ENCODE measurements at regions of chr17 and their contacts with region 1.

Region 1: GRCh38 chr17:40474419-40475002 is 26.9 kb downstream of the TNS4 start:
- H3K4me3 ChIP-seq: no peak overlapping the region
- H3K27ac ChIP-seq: no peak overlapping the region
- H3K4me1 ChIP-seq: no peaks in the 10 kb centered on the region; the same call in 1 of the 2 replicates
- CTCF ChIP-seq: no peak

Region 2: DNA sequence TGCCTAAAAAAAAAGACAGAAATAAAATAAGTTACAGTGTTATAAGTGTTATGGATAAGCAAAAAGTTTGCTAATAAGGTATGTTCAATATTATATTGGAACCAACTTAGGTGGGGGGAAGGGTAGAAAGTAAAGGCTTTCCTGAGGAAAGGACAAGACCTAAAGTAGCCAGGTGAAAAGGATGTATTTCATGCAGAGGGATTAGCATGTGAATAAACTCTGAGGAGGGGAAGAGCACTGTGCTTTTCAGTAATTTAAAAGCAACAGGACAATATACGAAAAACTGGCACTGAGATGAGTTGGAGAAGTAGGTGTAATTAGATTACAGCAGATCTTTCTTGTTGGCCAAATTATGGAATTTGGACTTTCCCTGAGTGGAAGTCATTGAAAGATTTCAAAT is 64.4 kb before region 1 on chr17:
- CTCF ChIA-PET with region 1: interaction called, 25 read pairs
- POLR2A ChIA-PET with region 1: interaction called, 8 read pairs
- H3K4me3 ChIP-seq: no peak overlapping the region
- H3K27ac ChIP-seq: no peak overlapping the region
- H3K4me1 ChIP-seq: no peaks in the 10 kb centered on the region
- CTCF ChIP-seq: no peak

Region 3: GRCh38 chr17:40422990-40423616 is 51.4 kb before region 1 on chr17:
- CTCF ChIA-PET with region 1: interaction called, 26 read pairs
- POLR2A ChIA-PET with region 1: interaction called, 22 read pairs
- H3K4me3 ChIP-seq: no peak overlapping the region
- H3K27ac ChIP-seq: no peak overlapping the region
- H3K4me1 ChIP-seq: peaks cover 8% of the 10 kb centered on the region
- CTCF ChIP-seq: peak; percentile 49

Region 4: GRCh38 chr17:40450175-40450574 is 24.3 kb before region 1 on chr17:
- CTCF ChIA-PET with region 1: interaction called, 57 read pairs
- POLR2A ChIA-PET with region 1: interaction called, 7 read pairs
- H3K4me3 ChIP-seq: no peak overlapping the region
- H3K27ac ChIP-seq: no peak overlapping the region
- H3K4me1 ChIP-seq: no peaks in the 10 kb centered on the region
- CTCF ChIP-seq: peak; percentile 60

Region 5: GRCh38 chr17:40490289-40490853 is 15.9 kb after region 1 on chr17:
- CTCF ChIA-PET with region 1: interaction called, 65 read pairs
- POLR2A ChIA-PET with region 1: interaction called, 13 read pairs
- H3K4me3 ChIP-seq: no peak overlapping the region
- H3K27ac ChIP-seq: no peak overlapping the region; the same call in 1 of the 2 replicates
- H3K4me1 ChIP-seq: peaks cover 17% of the 10 kb centered on the region
- CTCF ChIP-seq: no peak

Region 6: DNA sequence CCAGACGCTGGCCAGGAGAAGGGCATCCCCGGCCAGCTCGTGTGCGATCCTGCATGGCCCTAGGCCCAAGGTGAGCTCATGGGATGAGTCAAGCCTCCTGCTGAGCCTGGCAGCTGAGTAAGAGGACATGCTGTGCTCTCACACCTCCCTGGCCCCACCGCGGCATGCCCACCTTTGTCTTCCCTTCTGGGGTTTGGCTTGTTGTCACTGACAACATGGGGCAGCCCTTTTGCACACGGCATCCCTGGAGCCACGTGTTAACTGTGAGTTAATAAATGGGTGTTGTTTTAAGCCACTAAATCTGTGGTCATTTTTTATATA is 35.8 kb after region 1 on chr17:
- CTCF ChIA-PET with region 1: interaction called, 17 read pairs
- POLR2A ChIA-PET with region 1: interaction called, 9 read pairs
- H3K4me3 ChIP-seq: no peak overlapping the region
- H3K27ac ChIP-seq: no peak overlapping the region
- H3K4me1 ChIP-seq: 0 out of 2 replicates have a peak, but pooled peaks cover 4% of the 10 kb centered on the region
- CTCF ChIP-seq: no peak

Region 7: DNA sequence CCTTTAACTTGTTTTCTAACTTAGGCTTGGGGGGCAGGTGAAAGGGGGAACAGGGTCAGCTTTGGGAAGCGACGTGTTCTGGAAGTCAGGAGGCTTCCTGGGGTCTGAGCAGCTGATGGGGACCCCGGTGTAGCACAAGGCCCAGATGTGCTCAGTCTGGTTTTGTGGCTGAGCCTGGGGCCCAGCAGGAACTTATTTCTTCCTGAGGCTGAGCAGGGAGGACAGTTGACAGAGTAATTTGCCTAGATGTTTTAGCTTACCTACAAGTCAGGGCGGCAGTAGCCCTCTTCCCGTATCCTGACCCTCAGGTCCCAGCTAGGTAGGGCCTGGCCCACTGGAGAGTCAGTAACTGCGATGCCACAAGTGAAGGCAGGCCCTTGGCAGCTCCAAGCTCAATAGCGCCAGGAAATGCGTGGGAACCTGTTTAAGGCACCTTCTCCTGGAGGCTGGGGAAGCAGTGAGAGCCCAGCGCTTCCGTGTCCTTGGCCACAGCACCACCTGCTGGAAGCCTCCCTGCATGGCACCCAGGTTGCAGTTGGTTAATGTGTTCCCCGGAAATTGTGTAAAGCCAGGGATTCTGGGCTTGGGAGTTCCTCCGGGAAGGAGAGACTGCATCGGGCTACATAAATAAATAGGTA is 85.6 kb after region 1 on chr17:
- CTCF ChIA-PET with region 1: interaction called, 28 read pairs
- POLR2A ChIA-PET with region 1: no interaction called
- H3K4me3 ChIP-seq: no peak overlapping the region
- H3K27ac ChIP-seq: no peak overlapping the region
- H3K4me1 ChIP-seq: no peaks in the 10 kb centered on the region
- CTCF ChIP-seq: peak; percentile 97

Region 8: DNA sequence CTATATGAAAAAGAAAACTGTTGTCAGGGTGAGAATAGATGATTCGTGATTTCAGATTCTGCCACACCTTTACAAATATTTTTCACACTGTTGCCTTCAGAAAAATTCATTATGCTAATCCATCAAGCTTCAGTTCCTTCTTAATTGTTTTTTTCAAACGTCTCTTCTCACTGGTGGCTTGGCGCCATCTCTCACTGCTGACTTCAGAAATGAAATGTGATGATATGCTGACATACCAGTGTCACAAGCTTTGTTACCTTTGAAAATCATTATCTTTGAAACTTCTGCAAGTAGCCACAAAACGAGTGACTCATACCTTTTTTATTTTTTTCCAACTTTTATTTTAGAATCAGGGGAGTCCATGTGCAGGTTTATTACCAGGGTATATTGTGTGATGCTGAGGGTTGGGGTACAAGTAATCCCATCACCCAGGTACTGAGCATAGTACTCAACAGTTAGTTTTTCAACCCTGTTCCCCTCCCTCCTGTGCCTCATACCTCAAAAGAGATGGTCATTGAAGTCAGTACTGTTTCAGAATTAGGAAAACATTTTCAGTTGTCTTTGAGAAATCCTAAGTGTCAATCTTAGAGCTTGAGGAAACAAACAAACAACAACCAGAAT is 204.5 kb after region 1 on chr17:
- CTCF ChIA-PET with region 1: no interaction called
- POLR2A ChIA-PET with region 1: no interaction called
- H3K4me3 ChIP-seq: no peak overlapping the region
- H3K27ac ChIP-seq: no peak overlapping the region
- H3K4me1 ChIP-seq: no peaks in the 10 kb centered on the region
- CTCF ChIP-seq: no peak

Measured in HEK293 (cell line).